ENCODE measurements at regions of chr6 and their contacts with region 1.

Region 1: DNA sequence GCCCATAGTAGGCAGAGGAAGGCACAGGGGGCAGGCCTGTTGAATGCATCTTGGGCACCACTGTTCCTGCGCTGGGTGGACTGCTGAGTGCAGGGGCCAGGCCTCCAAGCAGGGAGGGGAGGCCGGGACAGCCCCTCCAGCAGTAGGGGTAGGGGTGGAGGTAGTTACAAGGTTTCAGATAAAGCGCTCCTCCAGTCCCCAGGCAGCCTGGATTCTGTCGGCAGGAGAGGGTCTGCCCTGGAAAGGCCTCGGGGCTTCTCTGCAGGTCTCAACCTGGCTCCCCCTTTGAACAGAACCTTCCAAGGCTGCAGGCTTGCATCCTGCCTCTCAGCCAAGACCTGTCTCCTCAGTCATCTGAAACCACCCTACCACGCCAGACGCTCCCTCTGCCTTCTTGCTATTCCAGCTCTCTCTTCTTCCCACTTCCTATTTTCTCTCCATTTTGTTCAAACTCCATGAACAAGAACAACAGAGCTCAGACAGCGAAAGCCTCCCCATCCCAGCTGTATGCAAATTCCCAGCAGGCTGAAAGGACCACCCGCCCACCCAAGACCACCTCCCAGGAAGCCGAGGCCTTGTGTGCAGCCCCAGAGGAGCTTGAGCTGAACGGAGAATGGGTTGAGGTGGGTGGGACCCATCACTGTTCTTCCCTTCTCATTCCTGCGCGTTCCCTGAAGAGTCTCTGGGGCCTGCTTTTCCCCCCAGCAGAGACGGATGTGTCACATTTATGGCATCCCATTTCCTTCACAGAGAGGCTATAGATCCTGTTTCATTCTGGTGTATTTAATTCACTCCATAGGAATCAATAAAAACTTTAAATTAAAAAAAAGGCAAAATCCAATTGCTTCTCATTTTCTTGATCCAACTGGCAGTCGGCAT is 1.4 kb downstream of the MLN start:
- DNase-seq: no peak
- H3K4me3 ChIP-seq: no peak overlapping the region
- H3K27ac ChIP-seq: no peak overlapping the region
- H3K4me1 ChIP-seq: no peaks in the 10 kb centered on the region
- H3K27me3 ChIP-seq: peaks cover 21% of the 10 kb centered on the region
- CTCF ChIP-seq: no peak
- EP300 ChIP-seq: no peak
- POLR2A ChIP-seq: no peak

Region 2: DNA sequence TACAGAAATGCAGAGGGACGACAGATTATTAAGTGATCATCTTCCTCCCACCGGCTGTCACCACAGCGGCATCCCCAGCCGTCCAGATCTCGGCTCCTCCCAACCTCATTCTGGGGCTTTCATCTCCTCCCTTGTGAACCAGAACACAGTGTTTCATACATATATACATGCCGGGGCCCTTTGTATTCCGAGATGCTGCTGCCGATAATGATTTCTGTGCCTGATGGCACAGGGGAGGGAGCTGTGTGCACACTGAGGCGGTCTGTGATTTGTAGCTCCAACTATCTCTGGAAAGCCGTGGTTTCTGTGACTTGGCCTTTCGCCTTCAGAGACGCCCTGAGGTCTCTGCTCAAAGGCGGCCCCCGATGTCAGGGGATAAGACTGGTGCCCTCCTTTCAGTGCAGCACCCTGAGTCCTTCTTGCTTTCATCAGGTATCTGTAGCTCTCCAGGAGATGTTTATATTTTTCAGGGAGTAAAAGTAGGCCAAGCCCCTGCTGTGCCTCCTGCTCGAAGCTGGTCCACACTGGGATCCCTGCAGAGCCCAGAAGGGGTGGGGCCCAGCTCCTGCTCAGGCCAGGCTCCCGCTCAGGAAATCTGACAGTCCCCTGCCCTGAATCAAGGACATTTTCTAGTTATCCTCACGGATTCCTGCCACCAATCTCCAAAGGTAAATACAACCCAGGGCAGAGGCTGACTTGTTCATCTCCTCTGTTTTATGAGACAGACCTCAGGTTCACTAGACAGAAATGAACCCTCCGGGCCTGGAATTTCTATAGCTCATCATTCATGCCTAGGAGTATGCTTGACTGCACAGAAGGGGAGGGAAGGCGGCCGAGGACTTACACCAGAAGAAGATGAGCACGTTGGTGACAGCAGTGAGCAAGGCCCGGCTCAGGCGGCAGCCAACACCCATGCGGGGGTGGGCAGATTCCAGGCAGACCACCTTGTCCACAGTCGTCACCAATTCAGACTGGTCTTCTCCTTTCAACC is 24.7 kb before region 1 on chr6:
- in situ Hi-C with region 1: no loop called
- intact Hi-C with region 1: loop called (anchors 1 kb)
- DNase-seq: no peak
- H3K4me3 ChIP-seq: no peak overlapping the region
- H3K27ac ChIP-seq: no peak overlapping the region
- H3K4me1 ChIP-seq: no peaks in the 10 kb centered on the region
- H3K27me3 ChIP-seq: no peaks in the 10 kb centered on the region
- CTCF ChIP-seq: no peak
- EP300 ChIP-seq: no peak
- POLR2A ChIP-seq: no peak

Region 3: DNA sequence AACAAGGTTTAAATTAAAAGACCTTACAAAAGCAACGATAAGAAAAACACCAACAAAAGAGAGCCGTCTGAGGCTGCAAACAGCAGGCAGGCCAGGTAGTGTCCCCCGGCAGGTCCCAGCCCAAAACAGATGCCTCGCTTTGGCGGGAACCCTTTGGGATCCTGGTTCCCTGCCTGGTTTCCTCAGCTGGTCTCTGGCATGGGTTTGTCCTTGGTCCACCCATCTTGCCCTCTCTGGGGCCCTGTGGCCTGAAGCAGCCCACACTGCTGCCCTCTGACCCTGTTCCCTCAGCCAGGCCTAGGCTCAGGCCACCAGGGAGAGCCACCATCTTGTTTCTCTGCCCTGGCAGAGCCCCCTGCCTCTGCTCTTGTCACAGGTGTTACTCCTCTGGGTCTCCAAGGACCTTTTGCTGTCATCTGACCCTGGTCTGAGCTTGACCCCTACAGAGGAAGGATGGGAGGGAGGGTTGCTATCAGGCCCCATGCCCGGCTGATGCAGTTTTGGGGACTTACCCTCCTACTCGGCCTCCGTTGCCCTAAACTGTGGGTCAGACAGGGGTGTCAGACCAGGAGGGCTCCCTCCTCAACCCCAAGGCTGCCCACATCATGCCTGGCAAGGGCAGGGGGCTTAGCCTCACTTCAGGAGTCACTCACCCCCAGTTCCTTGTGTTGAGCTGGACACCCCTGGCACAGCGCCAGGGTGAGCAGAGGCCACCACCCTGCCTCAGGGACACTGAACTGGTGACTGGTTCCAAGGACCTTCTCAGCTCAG is 374.0 kb after region 1 on chr6:
- in situ Hi-C with region 1: no loop called
- intact Hi-C with region 1: no loop called
- DNase-seq: no peak
- H3K4me3 ChIP-seq: no peak overlapping the region
- H3K27ac ChIP-seq: no peak overlapping the region
- H3K4me1 ChIP-seq: no peaks in the 10 kb centered on the region
- H3K27me3 ChIP-seq: no peaks in the 10 kb centered on the region
- CTCF ChIP-seq: no peak
- EP300 ChIP-seq: no peak
- POLR2A ChIP-seq: no peak

Measured in transverse colon (tissue), 4 donors.